Mammary epithelial cell (primary cell): ENCODE measurements at regions of chr2 and their contacts with region 1.

Region 1: DNA sequence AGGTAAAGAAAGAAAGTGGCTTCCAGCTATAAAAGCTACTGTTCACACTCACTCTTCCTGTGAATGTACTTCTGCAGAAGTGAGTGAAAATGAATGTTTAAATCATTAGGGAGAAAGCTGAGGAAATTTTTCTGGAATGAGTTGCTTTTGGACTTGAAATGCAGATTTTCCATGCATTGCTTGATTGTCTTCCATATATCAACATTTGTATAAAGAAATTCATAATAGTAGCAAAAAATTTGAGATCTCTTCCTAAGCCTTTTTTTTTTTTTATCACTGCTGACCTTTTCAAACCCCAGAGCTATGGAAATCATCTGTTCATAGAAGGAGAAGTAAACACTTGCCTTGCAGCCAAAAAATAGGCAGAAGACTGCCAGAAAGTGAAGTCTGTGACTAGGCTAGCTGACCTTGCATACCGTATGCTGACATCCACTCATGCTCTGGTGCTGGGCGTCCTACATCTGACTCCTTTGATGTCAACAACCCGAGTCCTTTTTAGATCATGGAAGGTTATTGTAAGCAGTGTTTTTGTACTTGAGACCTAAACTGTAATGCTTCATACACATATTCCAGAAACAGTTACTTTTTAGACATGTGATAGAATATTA is 154.5 kb upstream of the RASGRP3 start:
- DNase-seq: no peak
- H3K4me3 ChIP-seq: no peak overlapping the region
- H3K27ac ChIP-seq: no peak overlapping the region
- H3K4me1 ChIP-seq: peaks cover 9% of the 10 kb centered on the region
- H3K27me3 ChIP-seq: no peaks in the 10 kb centered on the region
- CTCF ChIP-seq: no peak

Region 2: DNA sequence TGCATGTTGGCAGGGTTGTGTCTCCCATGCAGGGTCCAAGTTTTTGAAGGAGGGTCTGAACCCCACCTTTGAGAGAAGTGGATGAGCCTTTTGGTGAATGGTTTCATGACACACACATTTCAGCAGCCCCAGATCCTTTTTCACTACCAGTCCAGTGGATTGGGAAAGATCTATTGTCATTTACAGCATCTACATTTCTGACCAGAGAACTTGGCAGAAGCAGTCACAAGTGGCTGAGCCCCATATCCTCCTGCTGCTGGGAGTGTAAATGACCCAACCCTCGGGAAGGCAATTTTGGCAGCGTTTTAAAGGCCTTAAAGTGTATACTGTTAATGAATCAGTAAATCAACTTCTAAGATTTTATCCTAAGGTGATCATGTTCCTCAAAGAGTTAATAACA is 19.6 kb before region 1 on chr2:
- CTCF ChIA-PET with region 1: no interaction called
- dilution Hi-C with region 1: no loop called
- in situ Hi-C with region 1: no loop called
- intact Hi-C with region 1: loop called (anchors 2 kb)
- DNase-seq: no peak
- H3K4me3 ChIP-seq: no peak overlapping the region
- H3K27ac ChIP-seq: no peak overlapping the region
- H3K4me1 ChIP-seq: peaks cover 8% of the 10 kb centered on the region
- H3K27me3 ChIP-seq: no peaks in the 10 kb centered on the region
- CTCF ChIP-seq: no peak